Heart left ventricle (tissue), 16 donors: ENCODE measurements at regions of chr15 and their contacts with region 1.

Region 1: DNA sequence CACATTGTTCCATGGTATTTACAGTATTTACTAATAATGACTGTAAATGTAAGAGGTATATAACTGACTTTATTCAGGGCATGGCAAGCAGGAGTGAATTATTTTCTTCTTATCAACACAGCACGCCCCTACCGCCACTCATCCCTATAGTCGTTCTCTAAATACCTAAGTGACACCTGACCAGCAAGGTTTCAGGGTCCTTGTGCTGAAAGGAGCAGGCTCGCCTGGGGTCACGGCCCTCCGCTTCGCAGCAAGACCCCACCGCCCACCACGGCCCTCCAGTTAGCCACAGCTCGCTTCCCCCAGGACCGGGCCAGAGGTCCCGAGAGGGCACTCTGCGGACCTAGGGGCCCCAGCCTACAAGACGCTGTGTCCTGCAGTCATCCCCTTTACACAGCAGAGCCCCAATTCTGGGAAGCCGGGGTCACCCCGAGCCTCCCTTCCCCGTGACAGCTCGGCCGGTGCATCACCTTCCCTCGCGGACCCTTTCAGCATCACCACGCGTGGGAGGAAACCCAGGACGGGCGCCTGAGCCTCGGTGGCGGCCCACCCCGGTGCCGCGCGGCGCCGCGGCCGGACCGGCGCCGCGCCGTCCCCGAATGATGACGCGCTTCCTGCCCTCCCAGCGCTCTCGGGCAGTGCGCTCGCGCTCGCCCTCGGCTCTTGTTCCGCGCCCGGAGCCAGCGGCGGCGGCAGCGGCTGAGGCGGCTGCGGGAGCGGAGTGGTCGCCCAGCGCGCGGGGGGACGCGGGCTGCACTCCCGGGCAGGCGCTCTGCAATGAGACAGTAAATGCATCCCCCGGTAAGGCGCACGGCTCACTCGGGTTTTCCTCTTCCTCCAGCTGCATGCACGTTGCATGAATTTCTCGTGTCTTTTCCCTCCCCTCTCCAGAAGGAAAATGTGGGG is 225.1 kb upstream of the C2CD4B start:
- DNase-seq: peak; percentile 73 to 86 (median 79)
- ATAC-seq: peak; percentile 61 to 90 (median 85)
- H3K4me3 ChIP-seq: peak within 1 kb of the TSS; percentile 72 to 97 (median 92)
- H3K27ac ChIP-seq: peak within 1 kb of the TSS; percentile 74 to 92 (median 84)
- H3K4me1 ChIP-seq: peaks cover 0 to 25% (median 13%) of the 10 kb centered on the region in 12 donors
- H3K27me3 ChIP-seq: peaks cover 0 to 23% (median 0%) of the 10 kb centered on the region in 9 donors
- CTCF ChIP-seq: no peak
- POLR2A ChIP-seq: peak; percentile 62 to 86

Region 2: GRCh38 chr15:62109982-62110851 is 279.9 kb before region 1 on chr15:
- intact Hi-C with region 1: no loop called
- DNase-seq: no peak
- ATAC-seq: peak in 2 of 4 donors; percentile 56 to 63
- H3K4me3 ChIP-seq: no peak overlapping the region
- H3K27ac ChIP-seq: peak overlapping the region in 4 of 12 donors; percentile 2 to 46 (median 18)
- H3K4me1 ChIP-seq: peaks cover 0 to 16% (median 3%) of the 10 kb centered on the region in 12 donors
- H3K27me3 ChIP-seq: no peaks in the 10 kb centered on the region
- CTCF ChIP-seq: no peak
- POLR2A ChIP-seq: no peak

Region 3: GRCh38 chr15:62426387-62426956 is 36.3 kb after region 1 on chr15:
- intact Hi-C with region 1: no loop called
- DNase-seq: no peak
- ATAC-seq: peak in 3 of 4 donors; percentile 29 to 38 (median 36)
- H3K4me3 ChIP-seq: no peak overlapping the region
- H3K27ac ChIP-seq: no peak overlapping the region
- H3K4me1 ChIP-seq: peaks cover 0 to 31% (median 6%) of the 10 kb centered on the region in 12 donors
- H3K27me3 ChIP-seq: no peaks in the 10 kb centered on the region
- CTCF ChIP-seq: no peak
- POLR2A ChIP-seq: no peak

Region 4: GRCh38 chr15:62453981-62454380 is 63.8 kb after region 1 on chr15:
- intact Hi-C with region 1: loop called in 5 of 10 experiments (anchors 2 to 5 kb)
- DNase-seq: no peak
- ATAC-seq: peak in 2 of 4 donors; percentile 4 to 15
- H3K4me3 ChIP-seq: no peak overlapping the region
- H3K27ac ChIP-seq: peak overlapping the region in 10 of 12 donors; percentile 25 to 84 (median 50)
- H3K4me1 ChIP-seq: peaks cover 3 to 66% (median 40%) of the 10 kb centered on the region in 12 donors
- H3K27me3 ChIP-seq: no peaks in the 10 kb centered on the region
- CTCF ChIP-seq: no peak
- POLR2A ChIP-seq: no peak

Region 5: GRCh38 chr15:62495670-62496614 is 105.8 kb after region 1 on chr15:
- intact Hi-C with region 1: loop called in 1 of 10 experiments (anchors 5 kb)
- DNase-seq: peak in 4 of 5 donors; percentile 48 to 67 (median 60)
- ATAC-seq: peak; percentile 53 to 89 (median 85)
- H3K4me3 ChIP-seq: no peak overlapping the region
- H3K27ac ChIP-seq: peak overlapping the region; percentile 39 to 75 (median 58)
- H3K4me1 ChIP-seq: peaks cover 3 to 54% (median 35%) of the 10 kb centered on the region in 12 donors
- H3K27me3 ChIP-seq: no peaks in the 10 kb centered on the region
- CTCF ChIP-seq: no peak
- POLR2A ChIP-seq: no peak

Region 6: DNA sequence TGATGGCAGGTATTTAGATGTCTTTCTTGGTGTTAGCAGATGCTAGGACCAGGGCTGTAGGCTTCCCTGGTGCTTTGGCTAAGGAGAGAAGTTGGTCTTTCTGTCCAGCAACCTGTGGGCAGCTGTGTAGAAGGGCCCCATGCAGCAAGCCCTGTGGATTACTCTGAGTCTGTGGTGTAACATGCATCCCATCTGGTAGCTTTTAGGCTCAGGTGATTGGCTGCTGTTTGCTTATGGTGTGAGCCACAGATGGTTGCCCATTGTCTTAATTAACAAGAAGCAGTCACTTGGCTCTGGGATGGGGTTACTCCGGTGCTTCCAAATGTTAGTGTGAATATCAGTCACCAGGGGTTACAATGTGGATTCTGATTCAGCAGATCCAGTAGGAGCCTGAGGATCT is 143.5 kb after region 1 on chr15:
- intact Hi-C with region 1: no loop called
- DNase-seq: no peak
- ATAC-seq: no peak
- H3K4me3 ChIP-seq: no peak overlapping the region
- H3K27ac ChIP-seq: no peak overlapping the region
- H3K4me1 ChIP-seq: peaks cover 0 to 20% (median 4%) of the 10 kb centered on the region in 12 donors
- H3K27me3 ChIP-seq: no peaks in the 10 kb centered on the region
- CTCF ChIP-seq: no peak
- POLR2A ChIP-seq: no peak

Region 7: GRCh38 chr15:62558640-62559380 is 168.7 kb after region 1 on chr15:
- intact Hi-C with region 1: loop called in 2 of 10 experiments (anchors 10 kb)
- DNase-seq: peak in 4 of 5 donors; percentile 54 to 78 (median 74)
- ATAC-seq: peak; percentile 55 to 86 (median 84)
- H3K4me3 ChIP-seq: no peak overlapping the region
- H3K27ac ChIP-seq: peak overlapping the region in 9 of 12 donors; percentile 34 to 75 (median 43)
- H3K4me1 ChIP-seq: peaks cover 0 to 34% (median 21%) of the 10 kb centered on the region in 12 donors
- H3K27me3 ChIP-seq: no peaks in the 10 kb centered on the region
- CTCF ChIP-seq: no peak
- POLR2A ChIP-seq: no peak

Region 8: DNA sequence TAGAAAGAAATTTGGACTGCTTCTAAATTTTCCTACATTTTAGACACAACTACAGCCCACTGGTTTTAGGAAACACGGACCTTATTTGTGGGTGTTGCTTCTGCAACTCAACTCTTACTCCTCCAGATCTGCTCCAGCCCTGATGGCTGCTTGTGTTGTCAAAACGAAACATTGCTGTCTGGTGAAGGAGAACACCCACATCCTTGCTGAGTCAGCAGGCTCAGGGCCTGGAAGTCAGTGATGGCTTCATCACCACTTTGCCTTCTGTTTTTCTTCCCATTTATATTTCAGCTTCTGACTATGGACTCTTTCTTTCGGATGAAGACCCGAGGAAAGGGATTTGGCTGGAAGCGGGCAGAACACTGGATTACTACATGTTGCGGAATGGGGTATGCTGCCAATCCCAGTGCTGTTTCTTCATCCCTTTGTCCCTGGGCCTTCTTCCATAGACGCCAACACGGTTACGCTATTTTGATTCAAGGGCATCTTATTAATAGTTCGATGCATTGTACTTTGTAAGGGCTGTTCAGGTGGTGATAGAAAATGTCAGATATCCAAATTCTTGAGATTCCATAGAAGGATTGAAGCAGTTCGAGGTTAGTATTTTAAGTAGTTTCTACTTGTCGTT is 259.8 kb after region 1 on chr15:
- intact Hi-C with region 1: loop called (anchors 2 to 10 kb)
- DNase-seq: peak in 3 of 5 donors; percentile 36 to 58 (median 56)
- ATAC-seq: peak in 3 of 4 donors; percentile 57 to 83 (median 77)
- H3K4me3 ChIP-seq: no peak overlapping the region
- H3K27ac ChIP-seq: peak overlapping the region in 9 of 12 donors; percentile 7 to 69 (median 32)
- H3K4me1 ChIP-seq: peaks cover 0 to 47% (median 0%) of the 10 kb centered on the region in 12 donors
- H3K27me3 ChIP-seq: no peaks in the 10 kb centered on the region
- CTCF ChIP-seq: no peak
- POLR2A ChIP-seq: no peak

Region 9: GRCh38 chr15:62698646-62699045 is 308.5 kb after region 1 on chr15:
- intact Hi-C with region 1: loop called in 3 of 10 experiments (anchors 5 to 10 kb)
- DNase-seq: peak in 1 of 5 donors; percentile 45
- ATAC-seq: peak in 3 of 4 donors; percentile 52 to 76 (median 54)
- H3K4me3 ChIP-seq: no peak overlapping the region
- H3K27ac ChIP-seq: no peak overlapping the region
- H3K4me1 ChIP-seq: no peaks in the 10 kb centered on the region
- H3K27me3 ChIP-seq: no peaks in the 10 kb centered on the region
- CTCF ChIP-seq: peak in 2 of 12 donors; percentile 14 to 20
- POLR2A ChIP-seq: no peak

Region 10: DNA sequence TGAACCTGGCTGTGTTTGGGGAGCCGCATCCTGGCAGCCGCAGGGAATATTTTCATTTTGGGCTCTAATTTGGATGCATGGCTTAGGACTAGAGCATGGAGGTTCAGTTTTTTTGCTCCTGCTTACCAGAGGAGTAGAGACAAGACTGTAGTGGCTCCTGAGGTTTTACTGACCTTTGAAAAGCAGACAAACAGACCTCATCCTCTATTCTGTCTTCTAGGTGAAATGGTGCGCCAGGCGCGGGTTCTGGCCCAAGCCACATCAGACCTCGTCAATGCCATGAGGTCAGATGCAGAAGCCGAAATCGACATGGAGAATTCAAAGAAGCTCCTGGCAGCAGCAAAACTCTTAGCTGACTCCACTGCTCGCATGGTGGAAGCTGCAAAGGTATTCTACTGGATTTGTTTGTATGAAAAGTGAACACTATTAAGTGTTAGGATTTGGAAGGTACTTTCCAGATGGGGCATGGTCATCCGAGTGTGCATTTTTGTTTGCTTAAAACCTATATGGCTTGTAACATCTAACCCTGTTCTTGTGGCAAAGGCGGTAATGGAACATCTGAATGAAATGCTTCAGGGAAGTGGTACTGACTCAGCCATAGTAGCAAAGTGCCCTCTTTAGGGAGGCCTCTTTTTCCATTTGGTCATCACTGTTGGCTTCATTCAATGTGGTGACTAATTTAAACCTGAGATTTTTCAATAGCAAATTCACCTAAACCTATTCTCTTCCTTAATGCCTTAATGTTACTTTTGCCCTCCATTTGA is 321.7 kb after region 1 on chr15:
- intact Hi-C with region 1: loop called in 2 of 10 experiments (anchors 10 kb)
- DNase-seq: no peak
- ATAC-seq: no peak
- H3K4me3 ChIP-seq: no peak overlapping the region
- H3K27ac ChIP-seq: no peak overlapping the region
- H3K4me1 ChIP-seq: no peaks in the 10 kb centered on the region
- H3K27me3 ChIP-seq: no peaks in the 10 kb centered on the region
- CTCF ChIP-seq: no peak
- POLR2A ChIP-seq: no peak